Mammary epithelial cell (primary cell): ENCODE measurements at regions of chr2 and their contacts with region 1.

Region 1: DNA sequence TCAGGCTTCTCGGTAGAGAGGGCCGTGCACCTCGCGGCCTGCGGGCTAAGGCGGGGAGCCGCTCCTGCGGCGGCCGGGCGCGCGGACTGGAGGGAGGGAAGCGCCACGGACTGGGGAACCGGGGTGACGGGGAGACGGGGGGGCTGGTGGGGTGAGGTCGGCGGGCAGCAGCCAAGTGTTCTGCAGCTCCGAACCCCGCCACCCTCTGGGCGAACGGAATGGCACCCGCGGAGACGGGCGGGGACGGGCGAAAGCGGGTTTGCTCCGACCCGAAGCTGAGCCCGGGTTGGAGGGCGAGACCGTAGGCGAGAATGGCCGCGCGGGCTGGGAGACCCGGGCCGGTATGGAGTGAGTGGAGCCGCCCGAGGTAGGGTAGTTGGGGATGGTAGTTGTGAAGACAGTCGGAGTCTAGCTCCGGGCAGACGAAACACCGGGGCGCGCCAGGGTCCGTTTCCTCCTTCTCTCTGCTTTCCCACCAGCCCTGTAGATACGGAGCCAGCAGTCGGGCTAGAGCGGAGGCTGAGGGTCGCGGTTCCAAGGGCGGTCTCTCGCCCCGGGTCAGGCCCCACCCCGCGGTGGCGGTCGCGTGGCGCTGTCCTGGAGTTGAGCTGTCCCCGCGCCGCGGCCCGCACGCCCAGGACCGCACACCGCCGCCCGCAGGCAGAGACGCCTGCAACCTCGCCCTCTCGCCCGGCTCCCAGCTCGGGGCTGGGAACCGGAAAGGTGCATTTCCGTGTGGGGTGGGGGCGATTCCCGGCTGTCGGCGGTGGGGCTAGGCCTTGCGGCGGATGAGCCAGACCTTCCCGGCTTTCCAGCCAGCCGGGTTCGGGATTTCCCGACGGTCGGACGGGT is 160.3 kb upstream of the SIX2 start:
- DNase-seq: no peak
- H3K4me3 ChIP-seq: peak overlapping the region; percentile 44 to 52 (median 45)
- H3K27ac ChIP-seq: no peak overlapping the region
- H3K4me1 ChIP-seq: peaks cover 34% of the 10 kb centered on the region
- H3K27me3 ChIP-seq: peaks cover 7% of the 10 kb centered on the region
- CTCF ChIP-seq: no peak

Region 2: DNA sequence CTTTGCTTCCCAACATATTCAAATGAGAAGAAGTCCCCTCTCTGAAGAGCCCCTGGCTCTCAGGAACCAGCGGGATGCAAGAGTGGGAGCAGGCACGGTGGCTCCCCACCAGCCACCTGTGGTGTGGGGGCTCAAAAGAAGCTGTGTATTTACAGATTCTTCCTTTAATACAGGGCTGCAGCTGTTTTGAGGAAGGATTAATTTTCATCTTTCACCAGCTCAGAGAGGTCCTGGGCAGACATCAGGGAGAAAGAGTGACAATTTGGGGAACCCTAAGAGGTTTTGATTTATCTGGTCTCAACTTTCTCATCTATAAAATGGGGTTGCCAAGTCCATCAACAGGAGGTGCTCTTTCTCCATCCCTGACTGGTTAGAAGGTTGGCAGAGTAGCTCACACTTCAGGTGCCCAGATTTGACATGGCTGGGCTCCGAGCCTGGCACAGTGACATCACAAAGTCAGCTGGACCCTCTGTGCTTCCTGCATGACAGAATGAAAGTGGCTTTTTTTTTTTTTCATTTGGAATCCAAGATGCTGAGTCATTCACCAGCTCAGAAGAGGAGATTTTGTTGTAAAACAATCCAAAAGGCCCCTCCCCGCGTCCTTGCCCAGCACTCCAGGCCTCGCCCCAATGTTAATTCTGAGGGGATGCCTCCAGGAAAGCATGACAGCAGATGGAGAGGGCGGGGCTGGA is 144.8 kb before region 1 on chr2:
- CTCF ChIA-PET with region 1: no interaction called
- dilution Hi-C with region 1: no loop called
- in situ Hi-C with region 1: no loop called
- intact Hi-C with region 1: loop called (anchors 10 kb)
- DNase-seq: peak; percentile 87
- H3K4me3 ChIP-seq: no peak overlapping the region
- H3K27ac ChIP-seq: no peak overlapping the region
- H3K4me1 ChIP-seq: peaks cover 2% of the 10 kb centered on the region
- H3K27me3 ChIP-seq: no peaks in the 10 kb centered on the region
- CTCF ChIP-seq: peak; percentile 13 to 35

Region 3: DNA sequence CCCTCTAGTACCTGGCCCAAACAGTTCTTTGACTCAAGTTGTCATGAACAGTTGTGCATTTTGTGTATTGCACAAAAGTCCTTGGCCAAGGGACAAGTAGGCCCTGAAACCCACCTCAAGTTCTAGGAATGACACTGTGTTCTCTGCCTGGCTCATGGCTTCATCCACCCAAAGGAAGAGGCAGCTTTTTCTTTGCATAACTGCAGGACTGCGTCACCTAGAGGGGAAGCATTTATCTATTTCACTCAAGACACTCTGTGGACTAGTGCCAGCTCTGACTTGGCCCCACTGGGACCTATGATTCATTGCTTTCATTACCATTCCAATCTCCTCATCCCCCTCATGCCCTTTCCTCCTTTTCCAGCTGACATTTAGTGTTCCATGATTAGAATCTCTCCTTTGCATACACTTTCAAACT is 41.0 kb before region 1 on chr2:
- CTCF ChIA-PET with region 1: no interaction called
- dilution Hi-C with region 1: no loop called
- in situ Hi-C with region 1: no loop called
- intact Hi-C with region 1: no loop called
- DNase-seq: peak; percentile 77
- H3K4me3 ChIP-seq: no peak overlapping the region
- H3K27ac ChIP-seq: no peak overlapping the region
- H3K4me1 ChIP-seq: no peaks in the 10 kb centered on the region
- H3K27me3 ChIP-seq: no peaks in the 10 kb centered on the region
- CTCF ChIP-seq: no peak

Region 4: DNA sequence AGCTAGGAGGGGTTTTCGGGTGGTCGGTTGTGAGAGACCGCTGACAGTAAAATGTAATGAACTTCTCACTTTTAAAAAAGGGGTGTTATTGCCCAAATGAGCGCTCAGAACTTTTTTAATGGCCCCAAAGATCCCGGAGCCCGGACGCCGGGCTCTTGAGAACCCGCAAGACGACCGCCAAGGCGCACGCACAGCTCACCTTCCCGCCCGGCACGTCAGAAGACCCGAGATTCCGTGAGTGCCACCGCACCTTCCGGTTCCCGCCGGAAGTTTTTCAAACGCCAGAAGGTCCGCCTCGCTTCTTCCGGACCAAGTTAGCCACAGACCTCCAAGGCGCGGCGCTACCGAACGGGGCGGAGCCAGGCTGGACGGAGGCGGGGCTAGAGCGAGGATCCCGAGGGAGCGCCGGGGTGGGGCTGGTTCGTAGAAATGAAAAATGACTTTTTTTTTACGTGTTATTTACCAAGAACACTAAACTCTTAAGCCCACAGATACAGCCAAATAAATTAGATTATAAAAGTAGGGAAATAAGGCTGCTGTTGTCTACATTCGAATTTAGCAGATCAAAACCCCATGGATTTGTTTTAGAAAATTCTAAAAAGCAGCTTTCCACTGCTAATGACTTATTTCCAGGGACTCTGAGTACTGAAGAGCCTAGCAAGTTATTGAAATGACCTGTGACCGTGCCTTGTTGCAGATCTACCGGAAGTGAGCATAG is 441.6 kb after region 1 on chr2 and contains the start of gene SRBD1:
- CTCF ChIA-PET with region 1: no interaction called
- dilution Hi-C with region 1: no loop called
- in situ Hi-C with region 1: no loop called
- intact Hi-C with region 1: loop called (anchors 10 kb)
- DNase-seq: peak; percentile 90
- H3K4me3 ChIP-seq: peak within 1 kb of the TSS; percentile 59 to 99 (median 64)
- H3K27ac ChIP-seq: peak within 1 kb of the TSS; percentile 95
- H3K4me1 ChIP-seq: peaks cover 21% of the 10 kb centered on the region
- H3K27me3 ChIP-seq: no peaks in the 10 kb centered on the region
- CTCF ChIP-seq: no peak
- total RNA-seq, gene SRBD1: 14.3 to 18.8 TPM